Activated T-helper 1 cell treated with anti-CD3 and anti-CD28 coated beads, Interleukin-12 subunit alpha, Interleukin-12 subunit beta, Interleukin-2, Interleukin-4 antibody, amounts not matched to agents 30 ng/mL and 10 ng/mL and 1 ng/mL, durations not matched to agents 14 hours and 24 hours and 36 hours (primary cell): ENCODE measurements at regions of chr5 and their contacts with region 1.

Region 1: GRCh38 chr5:149561848-149562247 is 10.6 kb upstream of the CSNK1A1 start:
- DNase-seq: no peak
- H3K4me3 Mint-ChIP-seq: no peak overlapping the region
- H3K27ac Mint-ChIP-seq: no peak overlapping the region
- H3K4me1 Mint-ChIP-seq: peaks cover 18% of the 10 kb centered on the region
- H3K27me3 Mint-ChIP-seq: no peaks in the 10 kb centered on the region

Region 2: GRCh38 chr5:149141224-149141956 is 420.5 kb before region 1 on chr5 and contains the start of gene ABLIM3:
- intact Hi-C with region 1: loop called (anchors 2 kb)
- DNase-seq: peak; percentile 61
- H3K4me3 Mint-ChIP-seq: peak within 1 kb of the TSS; percentile 43
- H3K27ac Mint-ChIP-seq: no peak within 1 kb of the TSS
- H3K4me1 Mint-ChIP-seq: no peaks in the 10 kb centered on the region
- H3K27me3 Mint-ChIP-seq: peaks cover 32% of the 10 kb centered on the region
- total RNA-seq, gene ABLIM3: not detected in 2 replicates

Region 3: GRCh38 chr5:149317281-149318048 is 244.4 kb before region 1 on chr5:
- intact Hi-C with region 1: loop called (anchors 2 kb)
- DNase-seq: no peak
- H3K4me3 Mint-ChIP-seq: no peak overlapping the region
- H3K27ac Mint-ChIP-seq: no peak overlapping the region
- H3K4me1 Mint-ChIP-seq: no peaks in the 10 kb centered on the region
- H3K27me3 Mint-ChIP-seq: no peaks in the 10 kb centered on the region

Region 4: GRCh38 chr5:149381987-149382340 is 179.9 kb before region 1 on chr5:
- intact Hi-C with region 1: loop called (anchors 1 kb)
- DNase-seq: peak; percentile 59
- H3K4me3 Mint-ChIP-seq: no peak overlapping the region
- H3K27ac Mint-ChIP-seq: no peak overlapping the region
- H3K4me1 Mint-ChIP-seq: no peaks in the 10 kb centered on the region
- H3K27me3 Mint-ChIP-seq: peaks cover 2% of the 10 kb centered on the region

Region 5: DNA sequence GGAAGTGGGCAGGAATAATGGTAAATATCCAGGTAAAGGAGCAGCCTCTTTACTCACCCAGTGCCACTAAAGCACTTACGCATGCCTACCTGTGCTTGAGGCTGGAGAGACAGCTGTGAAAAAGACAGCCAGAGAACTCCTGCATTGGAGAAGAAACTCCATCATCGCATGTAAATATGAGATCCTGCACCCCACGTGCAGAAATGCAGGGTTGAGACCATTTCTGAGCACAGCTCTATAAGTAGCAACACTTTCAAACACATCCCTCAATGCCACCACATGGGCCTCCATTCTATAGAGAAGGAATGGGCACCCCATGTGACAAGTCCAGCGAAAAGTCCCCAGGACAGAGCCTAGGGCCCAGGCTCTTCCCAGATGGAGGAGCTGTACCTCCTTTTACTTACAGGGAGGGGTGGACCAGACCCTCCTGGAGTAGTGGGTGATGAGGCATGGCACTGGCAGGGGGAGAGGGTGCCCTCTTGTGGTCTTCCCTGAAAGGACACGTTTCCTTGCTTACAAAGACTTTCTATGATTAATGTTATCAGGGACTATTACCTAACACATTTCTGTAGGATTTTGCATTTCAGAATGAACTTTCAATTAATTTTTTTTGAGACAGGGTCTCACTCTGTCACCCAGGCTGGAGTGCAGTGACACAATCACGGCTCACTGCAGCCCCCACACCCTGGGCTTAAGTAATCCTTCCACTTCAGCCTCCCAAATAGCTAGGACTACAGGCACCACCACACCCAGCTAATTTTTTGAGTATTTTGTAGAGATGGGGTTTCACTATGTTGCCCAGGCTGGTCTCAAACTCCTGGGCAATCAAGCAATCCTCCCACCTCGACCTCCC is 127.5 kb before region 1 on chr5:
- intact Hi-C with region 1: loop called (anchors 1 kb)
- DNase-seq: peak; percentile 21
- H3K4me3 Mint-ChIP-seq: no peak overlapping the region
- H3K27ac Mint-ChIP-seq: no peak overlapping the region
- H3K4me1 Mint-ChIP-seq: peaks cover 14% of the 10 kb centered on the region
- H3K27me3 Mint-ChIP-seq: no peaks in the 10 kb centered on the region

Region 6: DNA sequence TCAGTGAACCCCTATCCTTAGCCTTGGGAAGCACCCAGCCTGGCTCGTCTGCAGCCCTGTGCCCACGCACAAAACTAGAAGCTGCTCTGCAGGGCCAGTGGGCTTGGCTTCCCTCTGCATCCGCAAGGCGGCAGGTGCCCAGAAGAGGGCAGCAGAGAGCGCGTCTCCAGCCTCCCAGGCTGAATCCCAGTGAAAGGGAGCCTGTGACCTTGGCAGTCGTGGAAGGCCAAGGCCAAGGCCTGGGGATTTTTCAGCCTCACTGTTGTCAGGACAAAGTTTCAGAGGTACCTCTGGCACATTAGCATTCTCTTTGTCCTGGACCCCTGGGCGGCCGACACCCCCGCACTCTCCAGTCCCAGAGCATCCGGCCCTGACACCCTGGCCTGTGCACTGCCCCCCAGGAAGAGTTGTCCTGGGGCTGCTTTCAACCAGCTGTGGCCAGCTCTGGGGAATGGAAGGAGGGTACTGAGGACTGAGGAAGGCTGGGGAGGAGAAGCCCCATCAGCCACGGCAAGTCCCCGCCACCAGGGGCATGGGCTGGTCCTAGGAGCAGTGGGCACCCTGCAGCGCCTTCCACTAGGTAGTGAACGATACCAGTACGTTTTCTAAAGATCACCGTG is 119.2 kb before region 1 on chr5:
- intact Hi-C with region 1: loop called (anchors 1 kb)
- DNase-seq: peak; percentile 52
- H3K4me3 Mint-ChIP-seq: no peak overlapping the region
- H3K27ac Mint-ChIP-seq: peak overlapping the region; percentile 69
- H3K4me1 Mint-ChIP-seq: peaks cover 25% of the 10 kb centered on the region
- H3K27me3 Mint-ChIP-seq: no peaks in the 10 kb centered on the region

Region 7: DNA sequence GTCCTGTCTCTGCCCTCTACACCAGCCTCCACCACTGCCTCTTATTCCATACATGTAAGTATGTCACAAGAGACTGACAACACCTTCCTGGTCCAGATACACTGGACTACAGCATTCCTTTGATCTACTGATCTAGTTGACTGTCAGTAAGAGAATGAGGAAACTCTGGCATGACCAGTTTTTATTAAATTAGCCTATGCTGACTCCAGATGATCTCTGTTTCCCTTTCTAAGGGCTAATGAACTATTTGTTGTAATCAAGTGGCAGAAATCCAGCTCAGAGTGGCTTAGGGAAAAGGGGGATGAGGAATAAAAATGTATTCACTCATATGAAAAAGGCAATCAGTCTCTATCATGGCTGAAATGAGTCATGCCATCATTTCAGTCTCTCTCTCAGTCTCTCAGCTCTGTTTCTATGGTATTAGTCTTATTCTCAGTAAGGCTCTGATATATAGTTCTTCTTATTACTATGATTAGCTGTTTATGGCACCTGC is 25.0 kb after region 1 on chr5:
- intact Hi-C with region 1: no loop called
- DNase-seq: no peak
- H3K4me3 Mint-ChIP-seq: no peak overlapping the region
- H3K27ac Mint-ChIP-seq: no peak overlapping the region
- H3K4me1 Mint-ChIP-seq: no peaks in the 10 kb centered on the region
- H3K27me3 Mint-ChIP-seq: peaks cover 5% of the 10 kb centered on the region

Region 8: DNA sequence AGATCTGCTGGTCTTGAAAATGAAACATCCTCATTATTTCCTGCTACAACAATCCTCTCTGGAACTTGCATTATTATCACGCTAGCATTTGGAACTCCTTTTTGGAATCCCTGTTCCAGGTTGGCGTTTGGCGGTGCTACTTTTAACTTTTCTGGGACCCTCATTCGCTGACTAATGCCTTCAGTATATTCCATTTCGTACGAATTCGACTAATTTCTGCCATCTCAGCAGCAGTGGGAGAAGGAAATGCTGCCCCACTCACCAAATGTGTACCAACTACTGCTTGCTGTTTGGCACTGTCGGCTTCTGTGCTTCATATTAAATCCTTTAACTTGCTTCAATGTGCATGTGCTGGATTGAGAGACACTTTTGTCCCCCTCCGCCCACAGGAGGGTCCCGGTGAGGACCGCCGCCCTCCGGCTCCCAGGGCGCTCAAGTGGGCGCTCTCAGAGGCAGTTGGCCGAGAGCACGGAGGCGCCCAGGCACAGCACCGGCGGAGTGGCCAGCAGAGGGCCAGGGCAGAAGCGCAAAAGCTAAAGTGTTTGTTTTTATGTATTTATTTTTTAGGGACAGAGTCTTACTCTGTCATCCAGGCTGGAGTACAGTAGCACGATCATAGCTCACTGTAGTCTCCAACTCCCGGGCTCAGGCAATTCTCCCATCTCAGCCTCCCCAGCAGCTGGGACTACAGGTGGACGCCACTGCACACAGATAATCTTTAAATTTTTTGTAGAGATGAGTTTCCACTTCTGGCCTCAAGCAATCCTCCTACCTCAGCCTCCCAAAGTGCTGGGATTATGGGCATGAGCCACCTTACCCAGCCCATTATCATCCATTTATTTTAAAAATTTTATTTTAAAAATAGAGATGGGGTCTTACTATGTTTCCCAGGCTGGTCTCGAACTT is 370.9 kb after region 1 on chr5:
- intact Hi-C with region 1: no loop called
- DNase-seq: no peak
- H3K4me3 Mint-ChIP-seq: no peak overlapping the region
- H3K27ac Mint-ChIP-seq: no peak overlapping the region
- H3K4me1 Mint-ChIP-seq: peaks cover 8% of the 10 kb centered on the region
- H3K27me3 Mint-ChIP-seq: peaks cover 11% of the 10 kb centered on the region